ENCODE measurements at regions of chr17 and their contacts with region 1.

Region 1: DNA sequence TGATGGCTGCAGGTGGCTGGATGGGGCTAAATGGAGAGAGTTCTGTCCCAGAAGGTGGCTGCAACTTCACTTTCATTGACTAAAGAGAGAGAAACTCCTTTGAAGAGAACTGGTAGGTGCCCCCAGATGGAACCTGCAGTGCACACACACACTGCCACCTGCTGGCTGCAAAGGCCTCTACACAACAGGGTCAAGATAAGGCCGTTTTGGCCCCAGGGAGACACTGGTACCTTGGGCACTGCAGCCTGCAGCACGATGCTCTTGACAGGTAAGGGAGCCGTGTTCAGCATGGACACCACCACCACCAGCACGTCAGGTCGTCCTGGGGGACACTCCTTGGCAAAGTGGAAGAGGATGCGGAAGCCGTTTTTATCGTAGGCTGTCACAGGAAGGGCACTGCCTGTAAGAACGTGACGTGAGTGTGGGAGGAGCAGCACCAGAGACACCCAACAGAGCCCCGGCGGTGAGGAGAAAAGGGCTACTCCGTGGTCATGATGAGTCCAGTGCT is 22.7 kb downstream of the GGA3 start:
- DNase-seq: peak; percentile 68
- H3K27ac ChIP-seq: peak overlapping the region; percentile 51
- CTCF ChIP-seq: peak; percentile 90

Region 2: DNA sequence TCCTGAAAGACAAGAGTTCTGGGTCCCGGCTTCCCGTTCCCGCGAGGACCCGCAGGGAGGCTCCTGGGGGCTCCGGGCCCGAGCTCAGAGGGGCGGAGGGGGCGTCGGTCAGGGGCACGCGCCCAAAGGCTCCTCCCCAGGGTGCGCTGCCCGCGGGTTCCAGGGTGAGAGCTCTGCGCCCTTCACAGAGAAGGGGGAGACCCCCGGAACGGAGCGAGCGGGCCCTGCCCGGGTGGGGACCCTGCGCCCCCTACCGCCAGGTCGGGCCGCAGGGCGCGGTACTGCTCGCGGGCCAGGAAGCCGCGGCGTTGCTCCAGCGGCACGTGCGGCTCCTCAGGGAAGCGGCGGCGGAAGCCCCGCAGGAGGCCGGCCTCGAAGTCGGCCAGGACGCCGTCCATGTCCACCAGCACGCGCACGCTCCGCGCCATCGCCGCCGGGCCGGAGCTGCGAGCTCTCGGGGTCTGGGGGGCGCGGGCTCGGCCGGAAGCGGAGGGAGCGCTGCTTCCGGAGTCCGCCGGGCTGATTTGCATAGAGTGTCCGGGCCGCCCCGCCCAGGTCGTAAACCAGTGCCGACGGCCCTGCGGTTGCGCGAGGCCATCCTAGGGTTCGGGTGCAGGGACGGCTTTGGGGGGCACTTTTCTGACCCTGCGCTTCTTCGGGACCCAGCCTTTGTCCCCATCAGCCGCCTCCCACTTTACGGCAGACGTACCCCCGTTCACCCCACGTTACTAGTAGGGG is 107.3 kb before region 1 on chr17 and contains the start of gene NT5C:
- CTCF ChIA-PET with region 1: no interaction called
- POLR2A ChIA-PET with region 1: no interaction called
- DNase-seq: peak; percentile 68
- H3K27ac ChIP-seq: peak within 1 kb of the TSS; percentile 100
- CTCF ChIP-seq: peak; percentile 78

Region 3: DNA sequence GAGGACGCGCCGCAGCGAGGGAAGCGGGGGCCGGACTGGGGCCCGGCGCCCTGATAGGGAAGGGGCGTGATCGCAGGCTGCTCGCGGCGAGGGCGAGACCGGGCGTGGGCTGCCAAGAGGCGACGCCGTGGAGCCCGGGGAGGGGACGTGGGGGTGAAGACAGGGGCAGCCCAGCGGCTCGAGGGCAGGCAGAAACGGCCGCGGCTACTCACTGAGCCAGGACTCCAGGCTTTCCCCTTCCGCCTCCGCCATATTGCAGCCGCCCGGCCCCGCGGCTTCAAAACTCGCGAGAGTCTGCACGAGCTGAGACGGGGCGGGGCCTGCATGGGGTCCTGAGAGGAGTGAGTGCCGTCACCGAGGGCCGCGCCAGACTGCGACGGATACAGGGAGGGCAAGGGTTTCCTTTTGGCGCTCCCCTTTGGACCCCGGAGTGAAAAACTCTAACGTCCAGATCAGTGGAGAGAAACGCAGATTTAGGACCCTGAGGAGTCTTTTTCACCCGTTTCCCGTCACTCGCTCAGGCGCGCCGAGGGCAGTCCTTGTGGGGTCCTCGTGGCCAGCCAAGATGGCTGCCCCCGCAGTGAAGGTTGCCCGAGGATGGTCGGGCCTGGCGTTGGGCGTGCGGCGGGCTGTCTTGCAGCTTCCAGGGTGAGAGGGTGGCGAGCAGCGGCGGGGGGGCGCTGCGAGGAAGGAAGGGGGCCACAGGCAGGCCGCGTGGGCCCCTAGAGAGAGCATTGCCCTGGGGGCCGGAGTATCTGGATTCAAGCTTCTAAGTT is 22.8 kb after region 1 on chr17 and contains the starts of genes GGA3 and MRPS7:
- CTCF ChIA-PET with region 1: interaction called, 15 read pairs
- POLR2A ChIA-PET with region 1: no interaction called
- DNase-seq: peak; percentile 96
- H3K27ac ChIP-seq: peak within 1 kb of the TSS; percentile 95
- CTCF ChIP-seq: no peak

Region 4: GRCh38 chr17:75468291-75468754 is 229.6 kb after region 1 on chr17:
- CTCF ChIA-PET with region 1: no interaction called
- POLR2A ChIA-PET with region 1: no interaction called
- DNase-seq: no peak
- H3K27ac ChIP-seq: no peak overlapping the region
- CTCF ChIP-seq: no peak